ENCODE measurements at regions of chr21 and their contacts with region 1.

Region 1: GRCh38 chr21:38712071-38712470 is 93.7 kb upstream of the ETS2 start:
- DNase-seq: peak; percentile 72
- ATAC-seq: peak; percentile 97
- H3K4me3 ChIP-seq: no peak overlapping the region
- H3K27ac ChIP-seq: no peak overlapping the region
- H3K4me1 ChIP-seq: no peaks in the 10 kb centered on the region
- H3K27me3 ChIP-seq: peaks cover 12% of the 10 kb centered on the region; the same call in 1 of the 2 replicates
- CTCF ChIP-seq: peak; percentile 74

Region 2: DNA sequence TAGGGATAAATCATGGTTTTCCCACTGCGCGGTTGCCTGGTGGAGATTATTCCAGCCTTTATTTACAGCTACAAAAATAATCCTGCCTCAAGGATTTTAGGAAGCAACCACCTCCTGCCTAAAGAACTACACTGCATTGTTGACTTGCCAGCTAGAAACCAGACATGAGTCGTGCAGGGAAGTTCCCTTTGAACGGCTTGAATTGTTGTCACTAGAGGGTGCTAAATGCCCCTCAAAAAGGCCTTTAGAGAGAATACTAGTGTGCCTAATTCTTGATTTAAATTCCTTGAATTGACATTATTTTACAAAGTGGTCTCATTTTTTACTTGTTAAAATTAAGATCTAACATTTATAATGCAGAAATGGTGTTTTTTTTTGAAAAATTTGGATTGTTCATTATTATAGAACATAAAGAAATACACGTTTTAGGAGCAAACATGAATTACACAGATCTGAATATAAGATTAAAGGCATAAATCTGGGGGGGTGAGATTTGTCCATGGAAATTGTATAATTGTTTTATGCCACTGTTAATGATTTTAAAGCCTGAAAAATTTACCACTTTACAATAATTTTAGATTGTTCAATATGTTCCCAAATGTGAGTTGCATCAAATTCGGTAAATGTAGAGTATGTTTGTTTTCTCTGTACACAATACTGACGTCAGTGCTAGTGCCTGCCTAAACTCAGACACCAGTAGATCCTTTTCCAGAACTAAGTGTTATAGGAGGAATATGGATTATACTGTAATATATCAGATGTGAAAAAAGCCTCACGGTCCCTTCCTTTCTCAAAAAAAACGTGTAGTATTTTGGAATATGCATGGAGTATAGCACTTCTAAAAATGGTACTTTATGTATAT is 206.2 kb before region 1 on chr21:
- CTCF ChIA-PET with region 1: interaction called, 5 read pairs
- POLR2A ChIA-PET with region 1: no interaction called
- intact Hi-C with region 1: loop called (anchors 1 kb)
- DNase-seq: peak; percentile 85
- ATAC-seq: peak; percentile 99
- H3K4me3 ChIP-seq: no peak overlapping the region
- H3K27ac ChIP-seq: no peak overlapping the region
- H3K4me1 ChIP-seq: no peaks in the 10 kb centered on the region
- H3K27me3 ChIP-seq: peaks cover 42% of the 10 kb centered on the region
- CTCF ChIP-seq: peak; percentile 83

Region 3: GRCh38 chr21:38567335-38567969 is 144.6 kb before region 1 on chr21:
- CTCF ChIA-PET with region 1: no interaction called
- POLR2A ChIA-PET with region 1: no interaction called
- intact Hi-C with region 1: no loop called
- DNase-seq: no peak
- ATAC-seq: no peak
- H3K4me3 ChIP-seq: no peak overlapping the region
- H3K27ac ChIP-seq: no peak overlapping the region
- H3K4me1 ChIP-seq: no peaks in the 10 kb centered on the region
- H3K27me3 ChIP-seq: peaks cover 82% of the 10 kb centered on the region
- CTCF ChIP-seq: no peak

Region 4: DNA sequence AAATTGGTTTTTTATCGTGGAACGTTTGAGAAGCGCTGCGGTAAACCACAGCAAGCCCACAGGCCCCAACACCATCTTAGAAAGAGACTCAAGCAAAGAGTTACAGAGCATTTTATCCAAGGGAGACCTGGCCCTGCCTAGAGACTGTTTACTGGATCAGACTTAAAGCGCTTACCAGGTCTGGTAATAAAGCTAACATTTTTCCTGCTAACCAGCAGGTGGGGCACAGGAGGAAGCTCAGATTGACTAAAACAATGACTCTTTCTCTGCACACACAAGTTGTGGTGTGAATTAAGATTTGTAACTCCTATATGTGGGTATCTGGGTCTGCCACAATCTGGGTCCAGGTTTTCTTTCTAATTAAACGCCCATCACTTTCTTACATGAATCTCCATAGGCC is 42.9 kb before region 1 on chr21:
- CTCF ChIA-PET with region 1: interaction called, 7 read pairs
- POLR2A ChIA-PET with region 1: no interaction called
- intact Hi-C with region 1: loop called (anchors 1 kb)
- DNase-seq: peak; percentile 56
- ATAC-seq: peak; percentile 84
- H3K4me3 ChIP-seq: no peak overlapping the region
- H3K27ac ChIP-seq: no peak overlapping the region
- H3K4me1 ChIP-seq: no peaks in the 10 kb centered on the region
- H3K27me3 ChIP-seq: peaks cover 57% of the 10 kb centered on the region
- CTCF ChIP-seq: peak; percentile 75

Measured in PC-3 (cell line).